ENCODE measurements at regions of chr15 and their contacts with region 1.

Region 1: GRCh38 chr15:60798821-60799220 is 319.9 kb upstream of the ICE2 start:
- DNase-seq: no peak
- ATAC-seq: peak; percentile 56
- H3K4me3 Mint-ChIP-seq: no peak overlapping the region
- H3K27ac Mint-ChIP-seq: no peak overlapping the region
- H3K4me1 Mint-ChIP-seq: peaks cover 46% of the 10 kb centered on the region
- H3K27me3 Mint-ChIP-seq: peaks cover 7% of the 10 kb centered on the region

Region 2: DNA sequence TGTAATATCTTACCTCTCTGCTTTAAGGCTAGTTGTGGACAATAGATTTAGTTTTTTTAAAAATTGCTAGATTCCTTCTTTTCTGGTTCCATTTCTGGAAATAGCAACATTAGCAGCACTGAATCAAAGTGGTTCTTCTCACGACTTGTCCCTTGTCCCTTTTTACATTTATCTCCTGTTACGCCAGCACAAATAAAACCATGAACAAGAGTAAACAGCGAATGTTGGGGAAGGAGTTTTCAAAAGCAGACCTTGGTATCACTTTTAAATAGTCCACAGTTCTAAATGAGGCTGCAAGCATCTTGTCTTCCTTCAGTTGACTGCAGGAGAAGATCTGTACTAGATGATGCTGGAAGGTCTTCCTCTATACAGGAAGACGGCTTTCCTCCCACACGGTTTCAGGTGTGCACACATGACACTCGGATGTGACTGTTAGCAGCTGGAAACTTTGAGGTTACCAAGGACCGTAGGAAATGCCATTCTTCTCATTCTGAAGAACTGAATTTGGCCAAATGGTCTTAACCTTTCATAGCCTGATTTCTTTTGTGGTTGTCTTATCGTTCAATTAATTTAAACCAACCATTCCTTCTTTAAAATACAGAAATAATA is 68.9 kb before region 1 on chr15:
- CTCF ChIA-PET with region 1: no interaction called
- DNase-seq: no peak
- ATAC-seq: no peak
- H3K4me3 Mint-ChIP-seq: no peak overlapping the region
- H3K27ac Mint-ChIP-seq: no peak overlapping the region
- H3K4me1 Mint-ChIP-seq: peaks cover 11% of the 10 kb centered on the region
- H3K27me3 Mint-ChIP-seq: no peaks in the 10 kb centered on the region

Region 3: DNA sequence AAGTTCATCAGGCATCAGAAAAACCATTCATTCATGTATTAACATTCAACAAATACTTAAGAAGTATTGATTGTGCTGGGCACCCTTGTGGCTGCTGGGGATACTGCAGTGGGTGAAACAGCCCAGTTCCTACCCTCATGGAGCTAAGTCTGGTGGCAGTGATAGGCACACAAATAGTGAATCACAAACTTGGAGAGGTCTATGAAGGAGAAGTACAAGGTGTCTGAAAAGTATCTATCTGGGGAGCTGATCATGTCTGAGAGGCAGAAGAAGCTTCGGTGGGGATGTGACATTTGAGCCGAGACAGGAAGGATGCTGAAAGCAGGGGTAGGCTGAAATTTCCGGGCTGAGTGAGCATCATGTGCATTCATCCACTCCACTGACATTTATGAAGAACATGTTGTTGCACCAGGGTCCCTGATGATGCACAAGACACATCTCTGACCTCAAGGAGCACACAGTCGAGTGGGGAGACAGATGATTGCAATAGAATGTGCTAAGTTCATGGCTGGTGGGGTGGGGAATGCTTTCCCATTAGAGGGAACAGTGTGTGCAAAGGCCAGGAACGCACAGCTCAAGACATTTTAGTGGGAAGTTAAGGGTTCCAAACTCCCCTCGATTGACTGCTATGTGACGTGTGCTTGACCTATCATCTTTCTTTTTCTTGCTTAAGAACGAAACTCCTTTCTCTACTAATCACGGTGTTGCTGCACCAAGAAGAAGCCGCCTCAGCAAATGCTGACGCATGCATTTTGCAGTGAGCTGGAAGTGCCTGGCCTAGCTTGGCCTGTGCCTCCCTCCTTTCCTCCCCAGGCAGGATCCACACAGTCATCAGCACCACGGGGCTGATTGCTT is 10.8 kb before region 1 on chr15:
- CTCF ChIA-PET with region 1: interaction called, 20 read pairs
- DNase-seq: peak; percentile 57
- ATAC-seq: peak; percentile 79
- H3K4me3 Mint-ChIP-seq: no peak overlapping the region
- H3K27ac Mint-ChIP-seq: peak overlapping the region; percentile 79
- H3K4me1 Mint-ChIP-seq: peaks cover 22% of the 10 kb centered on the region
- H3K27me3 Mint-ChIP-seq: no peaks in the 10 kb centered on the region

Region 4: GRCh38 chr15:60844511-60845174 is 45.8 kb after region 1 on chr15:
- CTCF ChIA-PET with region 1: no interaction called
- DNase-seq: peak; percentile 86
- ATAC-seq: peak; percentile 67
- H3K4me3 Mint-ChIP-seq: peak overlapping the region; percentile 51
- H3K27ac Mint-ChIP-seq: peak overlapping the region; percentile 77
- H3K4me1 Mint-ChIP-seq: peaks cover 67% of the 10 kb centered on the region
- H3K27me3 Mint-ChIP-seq: peaks cover 79% of the 10 kb centered on the region

Measured in activated CD8-positive, alpha-beta memory T cell treated with anti-CD3 and anti-CD28 coated beads, Interleukin-2, amount 10 ng/mL, durations not matched to agents 7 days and 5 days (primary cell).